Sigmoid colon (tissue), 7 donors: ENCODE measurements at regions of chr17 and their contacts with region 1.

Region 1: GRCh38 chr17:57255776-57256681 is at the start of gene MSI2:
- DNase-seq: peak; percentile 99
- H3K4me3 ChIP-seq: peak within 1 kb of the TSS; percentile 90 to 98 (median 94)
- H3K27ac ChIP-seq: peak within 1 kb of the TSS; percentile 95 to 99 (median 97)
- H3K4me1 ChIP-seq: peaks cover 0 to 34% (median 19%) of the 10 kb centered on the region in 4 donors
- H3K27me3 ChIP-seq: no peaks in the 10 kb centered on the region
- CTCF ChIP-seq: no peak
- EP300 ChIP-seq: peak; percentile 31 to 86 (median 82)
- POLR2A ChIP-seq: peak in 1 of 2 donors; percentile 22
- total RNA-seq, gene MSI2: 19.5 to 25.8 (median 20.8) TPM

Region 2: DNA sequence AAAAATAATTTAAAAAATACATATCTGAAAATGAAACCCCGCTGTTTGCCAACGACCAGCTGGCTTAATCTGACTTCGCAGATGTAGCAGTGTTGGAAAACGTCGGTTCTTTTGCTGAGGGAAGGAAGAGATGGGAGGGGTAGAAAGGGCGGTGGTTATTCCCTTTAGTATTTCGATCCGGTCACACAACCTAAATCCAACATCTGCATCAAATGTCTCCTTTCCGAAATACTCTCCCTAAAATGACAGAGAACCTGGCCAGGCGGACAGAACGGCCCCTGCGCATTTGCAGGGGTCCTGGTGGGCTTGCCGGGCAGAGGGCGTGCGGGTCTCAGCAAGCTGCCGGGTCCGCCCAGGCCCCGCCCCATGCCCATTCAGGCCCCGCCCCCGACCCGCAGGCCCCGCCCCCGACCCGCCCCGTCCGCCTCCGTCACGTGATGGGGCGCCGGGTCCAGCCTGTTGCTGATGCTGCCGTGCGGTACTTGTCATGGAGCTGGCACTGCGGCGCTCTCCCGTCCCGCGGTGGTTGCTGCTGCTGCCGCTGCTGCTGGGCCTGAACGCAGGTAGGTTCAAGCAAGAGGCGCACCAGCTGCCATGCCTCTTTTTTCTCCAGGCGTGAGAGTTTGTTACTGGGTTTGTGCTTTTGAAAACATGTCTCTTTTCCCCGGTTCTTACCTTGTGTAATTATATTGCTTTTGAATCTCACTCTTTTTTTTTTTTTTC is 278.2 kb before region 1 on chr17 and contains the start of gene SCPEP1:
- intact Hi-C with region 1: loop called (anchors 10 kb)
- DNase-seq: peak; percentile 94
- H3K4me3 ChIP-seq: peak within 1 kb of the TSS; percentile 50 to 61 (median 59)
- H3K27ac ChIP-seq: peak within 1 kb of the TSS; percentile 70 to 83 (median 78)
- H3K4me1 ChIP-seq: peaks cover 0 to 23% (median 19%) of the 10 kb centered on the region in 4 donors
- H3K27me3 ChIP-seq: no peaks in the 10 kb centered on the region
- CTCF ChIP-seq: no peak
- EP300 ChIP-seq: no peak
- POLR2A ChIP-seq: peak; percentile 42 to 45
- total RNA-seq, gene SCPEP1: 77.8 to 141 (median 85.6) TPM

Region 3: GRCh38 chr17:57541472-57542394 is 285.7 kb after region 1 on chr17:
- intact Hi-C with region 1: loop called (anchors 10 kb)
- DNase-seq: peak; percentile 80
- H3K4me3 ChIP-seq: no peak overlapping the region
- H3K27ac ChIP-seq: peak overlapping the region in 1 of 4 donors; percentile 61
- H3K4me1 ChIP-seq: peaks cover 0 to 30% (median 27%) of the 10 kb centered on the region in 4 donors
- H3K27me3 ChIP-seq: no peaks in the 10 kb centered on the region
- CTCF ChIP-seq: no peak
- EP300 ChIP-seq: peak in 1 of 4 donors; percentile 56
- POLR2A ChIP-seq: no peak

Region 4: DNA sequence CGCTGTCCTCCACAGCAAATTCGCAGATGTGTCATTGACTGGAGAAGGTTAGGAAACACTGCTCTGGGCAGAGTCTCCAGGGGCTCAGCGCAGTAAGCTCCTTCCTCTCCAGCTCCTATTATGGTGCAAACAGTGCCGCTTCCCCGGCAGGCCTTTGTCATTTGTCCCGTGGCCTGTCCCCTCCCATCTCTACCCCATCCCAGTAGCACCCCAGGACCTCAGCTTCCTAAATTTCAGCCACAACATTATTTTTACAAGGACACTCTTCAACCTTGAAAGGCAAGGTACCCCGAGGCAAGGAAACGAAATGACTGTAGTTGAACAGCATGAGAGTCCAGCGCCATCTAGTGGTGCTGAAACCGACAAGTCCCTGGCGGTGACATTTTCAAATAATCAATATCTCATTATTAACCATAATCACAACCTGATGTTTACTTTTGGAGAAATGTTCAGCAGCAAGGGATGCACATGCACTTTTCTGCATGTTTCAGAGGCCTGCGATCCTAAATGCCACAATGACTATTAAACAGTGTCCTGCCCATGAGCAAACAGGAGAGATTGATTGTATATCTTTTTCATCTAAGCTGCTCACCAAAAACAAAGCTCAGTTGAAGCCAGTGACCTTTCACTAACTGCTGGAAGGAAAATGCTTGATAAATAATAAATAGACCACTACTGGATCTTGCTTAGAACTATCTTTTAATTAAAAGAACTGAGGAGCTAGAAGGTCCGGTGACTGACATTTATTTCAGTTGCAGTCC is 577.3 kb after region 1 on chr17:
- intact Hi-C with region 1: loop called (anchors 5 kb)
- DNase-seq: peak; percentile 86
- H3K4me3 ChIP-seq: peak overlapping the region; percentile 27 to 50 (median 45)
- H3K27ac ChIP-seq: peak overlapping the region; percentile 78 to 83 (median 82)
- H3K4me1 ChIP-seq: peaks cover 0 to 22% (median 18%) of the 10 kb centered on the region in 4 donors
- H3K27me3 ChIP-seq: no peaks in the 10 kb centered on the region
- CTCF ChIP-seq: peak; percentile 84 to 94 (median 90)
- EP300 ChIP-seq: no peak
- POLR2A ChIP-seq: no peak

Region 5: DNA sequence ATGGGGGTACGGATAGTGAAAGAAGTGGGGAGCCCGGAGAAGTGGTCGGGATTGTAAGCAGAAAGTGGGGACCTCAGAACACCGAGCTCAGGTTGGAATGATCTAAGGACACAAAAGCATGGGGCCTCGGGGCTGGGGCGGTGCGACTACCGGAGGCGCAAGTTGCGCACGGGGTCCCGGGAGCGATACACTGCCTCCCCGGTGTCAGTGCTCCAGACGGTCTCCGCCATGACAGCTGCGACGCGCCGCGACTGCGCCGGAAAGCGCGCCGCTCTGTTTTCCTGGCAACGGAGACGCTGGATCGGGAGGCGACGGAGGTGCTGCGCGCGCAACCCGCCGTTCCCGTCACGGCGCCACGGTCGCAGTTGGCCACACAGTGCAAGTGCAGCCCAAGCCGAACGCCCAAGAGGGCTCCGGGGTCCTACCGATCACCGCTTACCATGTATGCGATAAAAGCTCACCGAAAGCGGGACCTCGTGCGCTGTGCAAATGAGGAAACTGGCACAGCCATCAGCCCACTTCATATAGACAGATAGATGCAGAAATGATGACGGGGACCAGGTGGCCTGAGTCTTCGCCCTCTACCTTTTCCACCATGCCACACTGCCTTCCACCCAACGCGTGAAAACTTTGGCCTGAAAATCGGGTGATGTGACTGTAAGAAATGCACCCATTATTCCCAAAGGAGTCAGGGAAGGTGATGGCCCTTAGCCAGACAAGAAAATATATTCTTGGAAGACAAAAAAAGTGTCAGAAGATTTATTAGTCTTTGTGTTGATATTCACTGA is 963.2 kb after region 1 on chr17 and contains the start of gene MKS1:
- intact Hi-C with region 1: loop called (anchors 10 kb)
- DNase-seq: peak; percentile 97
- H3K4me3 ChIP-seq: peak within 1 kb of the TSS; percentile 62 to 82 (median 78)
- H3K27ac ChIP-seq: peak within 1 kb of the TSS; percentile 68 to 89 (median 80)
- H3K4me1 ChIP-seq: peaks cover 0 to 11% (median 5%) of the 10 kb centered on the region in 4 donors
- H3K27me3 ChIP-seq: no peaks in the 10 kb centered on the region
- CTCF ChIP-seq: peak; percentile 58 to 79 (median 71)
- EP300 ChIP-seq: no peak
- POLR2A ChIP-seq: peak in 1 of 2 donors; percentile 17
- total RNA-seq, gene MKS1: 6.1 to 11.0 (median 8.4) TPM